ENCODE measurements at regions of chr7 and their contacts with region 1.

Region 1: DNA sequence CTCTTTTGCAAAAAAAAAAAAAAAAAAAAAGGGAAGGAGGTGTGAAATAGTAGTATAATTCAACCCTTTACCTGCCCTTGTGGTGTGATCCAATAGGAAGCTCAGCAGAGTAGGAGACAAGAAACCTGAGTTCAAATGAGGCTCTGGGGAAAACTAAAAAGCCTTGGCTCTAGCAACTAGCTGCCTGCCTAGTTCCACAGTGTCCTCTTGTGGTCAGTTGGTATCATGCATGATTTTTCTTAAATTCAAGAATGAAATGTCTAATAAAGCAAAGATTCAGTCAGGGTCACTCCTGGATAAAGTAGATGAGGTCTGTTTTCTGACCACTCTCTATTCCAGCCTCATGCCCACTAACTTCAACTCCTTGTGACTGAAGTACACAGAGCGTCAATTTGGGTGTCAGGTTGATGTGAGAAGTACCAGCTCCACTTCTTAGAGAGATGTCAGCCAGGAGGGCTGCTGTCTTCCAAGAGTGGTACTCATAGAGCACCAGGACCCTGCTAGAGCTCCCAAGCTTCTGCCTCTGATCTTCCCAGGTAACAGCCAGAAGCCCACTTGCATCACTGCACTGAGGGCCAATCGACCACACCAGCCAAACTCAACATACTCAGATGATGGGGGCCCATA is 10.5 kb downstream of the LSM5 start:
- H3K4me3 ChIP-seq: no peak overlapping the region
- H3K27ac ChIP-seq: no peak overlapping the region
- H3K4me1 ChIP-seq: no peaks in the 10 kb centered on the region
- CTCF ChIP-seq: 0 out of 2 replicates have a peak, but pooled peaks have one; percentile 25

Region 2: DNA sequence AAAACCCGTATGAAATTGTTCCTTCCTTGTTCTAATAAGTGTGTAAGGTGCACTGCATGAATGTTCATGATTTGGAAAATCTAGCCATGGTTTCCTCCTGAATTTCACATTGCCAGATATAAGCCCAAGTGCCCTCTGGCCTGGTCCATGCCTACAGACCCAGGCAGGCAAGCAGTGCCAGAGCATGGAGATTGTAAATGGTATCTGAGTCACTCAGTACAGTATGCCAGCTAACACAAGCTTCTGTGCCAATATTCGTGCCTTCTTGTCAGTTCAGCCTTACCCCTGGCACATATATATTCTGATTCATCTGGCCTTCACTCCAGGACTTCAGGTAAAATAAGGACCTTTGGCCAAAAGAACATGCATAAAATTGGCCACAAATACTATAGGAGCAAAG is 371.0 kb before region 1 on chr7:
- CTCF ChIA-PET with region 1: no interaction called
- POLR2A ChIA-PET with region 1: no interaction called
- H3K4me3 ChIP-seq: no peak overlapping the region
- H3K27ac ChIP-seq: no peak overlapping the region
- H3K4me1 ChIP-seq: no peaks in the 10 kb centered on the region
- CTCF ChIP-seq: no peak

Region 3: GRCh38 chr7:32212321-32212720 is 267.4 kb before region 1 on chr7:
- CTCF ChIA-PET with region 1: interaction called, 52 read pairs
- POLR2A ChIA-PET with region 1: no interaction called
- H3K4me3 ChIP-seq: no peak overlapping the region
- H3K27ac ChIP-seq: no peak overlapping the region
- H3K4me1 ChIP-seq: no peaks in the 10 kb centered on the region
- CTCF ChIP-seq: no peak

Region 4: GRCh38 chr7:32490127-32490822 is 10.6 kb after region 1 on chr7 and contains the start of gene LSM5:
- CTCF ChIA-PET with region 1: interaction called, 14 read pairs
- POLR2A ChIA-PET with region 1: interaction called, 3 read pairs
- H3K4me3 ChIP-seq: peak within 1 kb of the TSS; percentile 87
- H3K27ac ChIP-seq: peak within 1 kb of the TSS; percentile 71
- H3K4me1 ChIP-seq: peaks cover 3% of the 10 kb centered on the region; the same call in 1 of the 2 replicates
- CTCF ChIP-seq: no peak

Measured in HEK293 (cell line).